B cell (primary cell): ENCODE measurements at regions of chr9 and their contacts with region 1.

Region 1: DNA sequence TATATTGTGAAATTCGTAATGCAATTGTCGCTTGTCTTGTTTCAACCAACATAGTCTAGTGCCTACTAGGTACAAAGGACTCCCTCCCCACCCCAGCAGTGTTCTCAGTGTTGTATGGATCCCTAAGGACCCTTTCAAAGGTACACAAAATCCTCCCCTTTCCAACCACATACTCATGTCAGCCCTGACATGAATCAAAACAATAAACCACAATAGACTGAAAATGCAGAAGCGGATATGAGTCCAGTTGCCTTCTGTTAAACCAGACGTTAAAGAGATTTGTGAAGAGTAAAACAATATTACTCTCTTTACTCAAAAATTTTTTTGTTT is 82.4 kb upstream of the IFNK start:
- DNase-seq: peak; percentile 51
- ATAC-seq: peak; percentile 95
- H3K4me3 ChIP-seq: peak overlapping the region in 1 of 5 experiments; percentile 21
- H3K4me3 Mint-ChIP-seq: peak overlapping the region; percentile 70
- H3K27ac ChIP-seq: peak overlapping the region; percentile 15 to 42
- H3K27ac Mint-ChIP-seq: peak overlapping the region; percentile 87
- H3K4me1 ChIP-seq: peaks cover 50 to 53% of the 10 kb centered on the region in 2 donors
- H3K4me1 Mint-ChIP-seq: peaks cover 70% of the 10 kb centered on the region
- H3K27me3 ChIP-seq: no peaks in the 10 kb centered on the region
- H3K27me3 Mint-ChIP-seq: no peaks in the 10 kb centered on the region
- CTCF ChIP-seq: no peak

Region 2: DNA sequence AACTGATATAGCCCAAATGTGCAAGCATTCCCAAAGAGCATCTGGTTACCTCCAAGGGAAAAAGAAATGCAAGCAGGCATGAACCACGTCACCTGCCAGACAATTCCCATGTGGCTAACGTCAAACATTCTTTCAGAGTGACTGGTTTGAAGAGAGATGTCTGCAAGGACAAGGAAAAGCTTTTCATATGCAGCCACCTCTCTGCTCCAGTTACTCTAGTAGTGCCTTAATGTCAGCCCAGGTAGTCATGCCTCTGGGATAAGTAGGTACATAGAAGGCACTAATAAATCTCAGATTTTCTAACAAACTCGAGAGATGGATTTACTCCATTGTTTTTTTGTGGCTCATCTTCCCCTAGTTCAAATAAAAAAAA is 14.4 kb before region 1 on chr9:
- CTCF ChIA-PET with region 1: interaction called, 4 read pairs
- POLR2A ChIA-PET with region 1: no interaction called
- intact Hi-C with region 1: loop called (anchors 2 kb)
- DNase-seq: no peak
- ATAC-seq: no peak
- H3K4me3 ChIP-seq: no peak overlapping the region
- H3K4me3 Mint-ChIP-seq: no peak overlapping the region
- H3K27ac ChIP-seq: no peak overlapping the region
- H3K27ac Mint-ChIP-seq: no peak overlapping the region
- H3K4me1 ChIP-seq: peaks cover 26 to 27% of the 10 kb centered on the region in 2 donors
- H3K4me1 Mint-ChIP-seq: peaks cover 63% of the 10 kb centered on the region
- H3K27me3 ChIP-seq: no peaks in the 10 kb centered on the region
- H3K27me3 Mint-ChIP-seq: no peaks in the 10 kb centered on the region
- CTCF ChIP-seq: no peak

Region 3: DNA sequence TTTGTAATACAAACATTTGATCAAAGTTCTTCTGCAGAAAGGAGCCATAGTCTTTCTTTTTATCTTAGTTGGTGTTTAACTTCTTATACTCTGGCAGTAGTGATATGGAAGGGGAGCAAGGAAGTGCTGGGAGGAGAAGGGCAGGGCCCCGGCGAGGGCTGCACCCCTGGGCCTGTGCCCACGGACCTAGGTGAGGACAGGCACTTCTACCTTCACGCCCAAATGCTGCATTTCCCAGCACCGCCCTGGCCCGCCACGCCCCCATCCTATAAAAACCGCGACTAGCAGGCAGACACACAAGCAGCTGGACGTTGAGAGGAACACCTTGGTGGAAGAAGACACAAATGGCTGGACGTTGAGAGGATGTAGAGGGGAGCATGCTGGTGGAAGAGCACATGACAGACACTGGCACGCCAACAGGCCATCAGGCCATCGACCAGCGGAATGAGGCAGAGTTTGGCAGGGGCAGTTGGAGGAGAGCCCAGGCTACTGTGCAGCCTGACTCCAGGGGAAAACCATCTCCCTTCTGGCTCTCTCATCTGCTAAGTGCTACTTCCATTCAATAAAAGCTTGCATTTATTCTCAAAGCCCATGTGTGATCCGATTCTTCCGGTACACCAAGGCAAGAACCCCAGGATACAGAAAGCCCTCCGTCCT is 213.1 kb after region 1 on chr9:
- CTCF ChIA-PET with region 1: no interaction called
- POLR2A ChIA-PET with region 1: no interaction called
- intact Hi-C with region 1: no loop called
- DNase-seq: no peak
- ATAC-seq: no peak
- H3K4me3 ChIP-seq: no peak overlapping the region
- H3K4me3 Mint-ChIP-seq: no peak overlapping the region
- H3K27ac ChIP-seq: no peak overlapping the region
- H3K27ac Mint-ChIP-seq: no peak overlapping the region
- H3K4me1 ChIP-seq: no peaks in the 10 kb centered on the region
- H3K4me1 Mint-ChIP-seq: peaks cover 4% of the 10 kb centered on the region
- H3K27me3 ChIP-seq: no peaks in the 10 kb centered on the region
- H3K27me3 Mint-ChIP-seq: peaks cover 8% of the 10 kb centered on the region
- CTCF ChIP-seq: no peak